ENCODE measurements at regions of chr4 and their contacts with region 1.

Region 1: DNA sequence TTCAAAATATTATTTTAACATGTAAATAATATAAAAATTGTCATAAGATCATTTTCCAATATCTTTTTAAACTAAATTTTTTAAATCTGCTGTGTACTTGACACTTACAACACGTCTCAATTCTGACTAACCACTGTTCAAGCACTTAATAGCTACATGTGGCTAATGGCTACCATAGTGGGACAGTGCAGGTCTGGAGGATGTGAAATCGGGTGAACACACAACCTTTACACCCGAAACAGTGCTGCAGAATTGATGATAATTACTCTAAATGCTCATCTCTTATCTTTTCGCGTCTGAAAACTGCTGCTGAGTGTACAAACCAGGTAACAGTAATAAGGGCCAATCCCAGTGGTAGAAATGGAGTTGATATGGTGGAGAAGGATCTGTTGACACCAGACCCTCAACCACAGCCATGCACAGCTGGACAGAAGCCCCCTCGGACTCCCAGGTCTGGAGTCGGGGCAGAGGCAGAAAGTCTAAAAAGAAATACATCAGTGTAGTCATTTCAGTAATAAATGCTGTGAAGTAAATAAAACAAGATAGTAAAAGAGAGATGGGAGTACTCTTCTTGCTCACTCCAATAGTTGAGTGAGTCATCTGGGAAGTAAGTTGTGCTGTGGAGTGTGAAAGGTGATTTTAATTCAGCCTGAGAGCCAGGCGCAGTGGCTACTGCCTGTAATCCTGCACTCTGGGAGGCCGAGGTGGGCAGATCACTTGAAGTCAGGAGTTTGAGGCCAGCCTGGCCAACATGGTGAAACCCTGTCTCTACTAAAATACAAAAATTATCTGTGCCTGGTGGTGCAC is 150.0 kb downstream of the CBR4 start:
- DNase-seq: no peak
- ATAC-seq: no peak
- H3K4me3 ChIP-seq: no peak overlapping the region
- H3K27ac ChIP-seq: peak overlapping the region; percentile 74 to 86
- H3K4me1 ChIP-seq: peaks cover 4 to 16% of the 10 kb centered on the region in 2 donors
- H3K27me3 ChIP-seq: no peaks in the 10 kb centered on the region

Region 2: GRCh38 chr4:168636506-168637196 is 223.4 kb before region 1 on chr4:
- intact Hi-C with region 1: no loop called
- DNase-seq: no peak
- ATAC-seq: peak; percentile 69
- H3K4me3 ChIP-seq: no peak overlapping the region
- H3K27ac ChIP-seq: peak overlapping the region; percentile 82 to 93
- H3K4me1 ChIP-seq: peaks cover 1 to 11% of the 10 kb centered on the region in 2 donors
- H3K27me3 ChIP-seq: peaks cover 0 to 2% of the 10 kb centered on the region in 2 donors

Region 3: DNA sequence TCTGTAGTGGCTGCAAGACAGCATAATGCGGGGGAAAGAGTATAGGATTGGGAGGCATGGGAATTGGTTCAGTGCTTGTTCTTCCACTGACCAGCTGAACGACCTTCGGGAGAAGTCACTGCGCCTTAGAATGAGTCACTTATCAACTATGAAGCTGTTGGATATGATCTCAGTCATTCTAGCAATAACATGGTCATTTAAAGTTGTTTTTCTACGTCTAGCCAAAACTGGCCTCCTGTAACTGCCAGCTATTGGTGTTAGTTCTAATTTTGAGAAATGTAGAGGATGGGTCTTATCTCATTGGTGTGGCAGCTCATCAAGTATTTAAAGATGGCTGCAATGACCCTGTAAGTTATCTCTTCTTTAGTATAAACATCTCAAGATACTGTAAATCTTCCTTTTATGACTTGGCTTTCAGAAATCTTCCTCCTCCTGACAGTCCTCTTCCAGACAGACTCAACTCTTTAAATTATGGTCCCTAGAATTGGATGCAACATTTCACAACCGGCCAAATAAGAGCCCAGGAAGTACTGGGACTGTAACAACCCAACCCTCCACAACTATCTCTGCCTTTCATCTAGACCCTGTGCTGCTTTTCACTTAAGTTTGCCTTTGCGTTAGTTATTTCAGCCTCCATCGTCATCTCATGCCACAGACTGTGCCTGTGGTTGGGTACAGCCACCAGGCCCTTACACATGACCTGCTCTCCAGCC is 93.3 kb before region 1 on chr4:
- intact Hi-C with region 1: no loop called
- DNase-seq: no peak
- ATAC-seq: peak; percentile 79
- H3K4me3 ChIP-seq: no peak overlapping the region
- H3K27ac ChIP-seq: peak overlapping the region in 1 of 2 donors; percentile 92
- H3K4me1 ChIP-seq: peaks cover 0 to 6% of the 10 kb centered on the region in 2 donors
- H3K27me3 ChIP-seq: no peaks in the 10 kb centered on the region

Region 4: DNA sequence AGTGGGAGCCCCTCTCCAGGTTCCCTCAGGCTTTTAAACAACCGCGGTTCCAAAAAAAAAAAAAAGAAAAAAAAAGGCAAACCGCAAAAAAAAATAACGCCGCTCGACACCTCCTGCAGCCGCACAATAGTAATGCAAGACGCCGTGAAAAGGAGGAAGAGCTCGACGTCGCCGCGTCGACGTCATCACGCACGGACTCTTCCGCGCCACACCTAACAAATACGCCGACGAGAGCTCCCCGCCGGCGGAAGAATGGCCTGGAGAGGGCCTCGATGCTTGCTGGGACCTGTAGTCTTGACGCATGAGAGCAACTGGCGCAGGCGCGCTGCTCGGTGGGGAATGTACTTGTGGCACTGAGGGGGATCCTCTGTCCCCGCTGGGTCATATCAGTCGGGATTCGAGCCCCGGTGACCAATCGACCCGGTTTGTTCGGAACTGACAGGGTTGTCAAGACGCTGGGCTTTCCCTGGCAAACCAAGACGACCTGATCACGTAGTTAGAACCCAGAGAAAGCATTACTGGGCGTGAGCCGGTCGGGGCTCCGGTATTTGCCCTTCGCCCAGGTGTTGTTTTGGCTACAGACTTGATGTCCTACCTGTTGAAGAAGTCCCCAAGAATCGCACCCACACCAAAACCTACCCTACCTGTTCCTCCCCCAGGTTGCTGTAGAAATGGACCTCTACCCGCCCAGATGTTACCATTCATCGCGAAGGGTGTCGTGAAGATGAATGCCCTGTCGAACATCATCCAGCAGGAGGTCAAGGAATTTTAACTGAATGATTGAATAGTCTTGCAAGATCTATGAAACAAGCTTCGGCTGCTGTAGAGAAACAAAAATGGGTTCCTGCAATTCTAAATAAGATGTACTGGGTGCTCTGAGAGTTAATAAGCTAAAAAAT is 150.3 kb after region 1 on chr4 and contains the start of gene CBR4:
- intact Hi-C with region 1: loop called in 1 of 2 experiments (anchors 10 kb)
- DNase-seq: peak; percentile 99
- ATAC-seq: peak; percentile 98
- H3K4me3 ChIP-seq: peak within 1 kb of the TSS; percentile 83 to 85
- H3K27ac ChIP-seq: peak within 1 kb of the TSS in 1 of 2 donors; percentile 77
- H3K4me1 ChIP-seq: peaks cover 0 to 3% of the 10 kb centered on the region in 2 donors
- H3K27me3 ChIP-seq: no peaks in the 10 kb centered on the region
- total RNA-seq, gene CBR4: 13.6 to 20.5 TPM